ENCODE measurements at regions of chr6 and their contacts with region 1.

Region 1: DNA sequence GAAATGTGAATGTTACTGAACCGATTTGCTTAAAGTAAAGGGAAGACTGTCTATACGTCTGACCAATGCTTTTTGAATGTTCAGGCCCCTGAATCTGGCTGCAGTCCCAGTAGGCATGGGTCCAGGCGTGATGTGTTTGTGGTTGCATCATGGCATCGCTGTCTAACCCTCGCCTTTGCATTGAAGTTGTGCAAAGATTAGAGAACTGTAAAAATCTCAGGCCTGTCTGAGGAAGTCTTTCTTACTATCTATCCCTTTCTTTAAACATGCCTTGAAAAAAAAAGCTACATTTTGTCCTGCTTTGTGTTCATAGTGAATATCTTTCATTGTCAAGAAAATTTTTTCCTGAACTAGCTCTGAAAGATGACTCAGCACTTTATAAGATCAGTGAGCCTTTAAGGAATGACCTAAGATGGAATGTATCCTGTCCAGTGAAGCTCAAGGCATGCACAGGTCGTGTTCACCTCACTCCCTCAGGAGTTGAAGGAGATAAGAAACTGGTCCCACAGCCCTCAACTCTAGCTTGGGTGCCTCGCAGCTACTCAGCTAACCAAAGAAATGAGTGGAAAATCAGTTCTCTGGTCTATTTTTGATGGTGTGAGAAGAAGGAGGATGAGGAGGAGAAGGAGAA is 48.5 kb downstream of the TPD52L1 start:
- DNase-seq: no peak

Region 2: GRCh38 chr6:125191916-125192609 is 10.0 kb before region 1 on chr6:
- CTCF ChIA-PET with region 1: interaction called, 10 read pairs
- POLR2A ChIA-PET with region 1: interaction called, 3 read pairs
- DNase-seq: peak; percentile 83

Region 3: DNA sequence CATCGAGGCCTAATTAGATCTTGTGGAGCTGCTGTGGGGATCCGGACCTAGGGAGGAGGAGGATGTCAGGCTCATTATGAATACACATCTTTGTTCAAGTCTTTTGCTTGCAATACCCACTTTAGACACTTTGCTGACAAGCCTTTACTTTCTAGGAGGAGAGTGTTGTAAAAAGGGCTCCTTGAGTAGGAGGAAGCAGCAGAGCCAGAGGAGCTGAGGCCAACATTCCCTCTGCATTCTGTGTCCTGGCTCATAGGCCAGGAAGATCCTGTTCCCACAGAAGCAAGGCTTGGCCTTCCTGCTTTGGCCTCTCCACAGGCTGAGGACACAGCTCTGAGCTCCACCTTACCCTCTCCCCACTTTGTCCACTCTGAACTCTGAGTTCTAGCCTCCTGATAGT is 18.6 kb after region 1 on chr6:
- CTCF ChIA-PET with region 1: no interaction called
- POLR2A ChIA-PET with region 1: no interaction called
- DNase-seq: no peak

Region 4: GRCh38 chr6:125232476-125232875 is 30.4 kb after region 1 on chr6:
- CTCF ChIA-PET with region 1: no interaction called
- POLR2A ChIA-PET with region 1: no interaction called
- DNase-seq: no peak